Heart right ventricle (tissue), 16 donors: ENCODE measurements at regions of chr15 and their contacts with region 1.

Region 1: DNA sequence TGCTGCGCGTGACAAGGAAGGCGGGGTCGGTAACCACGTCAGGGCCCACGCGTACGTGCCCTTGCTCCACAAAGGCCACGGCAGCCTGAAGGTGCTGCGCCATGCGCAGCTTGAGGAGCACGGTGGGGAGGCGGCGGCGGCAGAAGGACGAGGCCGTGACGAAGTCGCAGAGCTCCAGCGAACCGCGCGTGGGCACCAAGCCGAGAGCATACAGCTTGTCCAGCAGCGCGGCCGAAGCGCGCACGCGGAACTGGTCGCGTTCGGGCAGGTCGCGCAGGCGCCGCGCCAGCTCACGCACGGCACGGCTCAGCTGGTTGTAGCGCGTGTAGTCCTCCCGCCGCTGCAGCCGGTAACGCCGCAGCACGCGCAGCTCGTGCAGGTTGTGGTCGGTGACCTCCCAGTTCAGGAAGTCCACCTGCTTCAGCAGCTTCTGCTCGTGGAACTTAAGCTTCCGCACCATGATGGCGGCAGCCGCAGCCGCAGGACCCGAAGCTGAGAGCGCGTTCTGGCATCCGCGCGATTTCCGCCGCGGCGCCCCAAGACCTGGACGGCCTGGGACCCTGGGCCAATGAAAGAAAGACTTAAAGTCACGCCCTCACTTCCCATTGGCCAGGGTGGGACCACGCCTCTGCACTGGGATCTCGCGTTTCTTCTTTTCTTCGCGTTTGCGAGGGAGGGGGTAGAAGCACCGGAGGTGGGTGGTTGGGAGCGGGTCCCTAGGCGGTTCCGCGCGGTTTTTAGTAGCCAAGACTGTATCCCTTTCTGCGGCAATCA is at the start of gene IMP3:
- DNase-seq: peak; percentile 93 to 96
- ATAC-seq: peak; percentile 97 to 98 (median 97)
- H3K4me3 ChIP-seq: peak within 1 kb of the TSS; percentile 67 to 98 (median 88)
- H3K27ac ChIP-seq: peak within 1 kb of the TSS; percentile 87 to 100 (median 92)
- H3K4me1 ChIP-seq: peaks cover 15 to 42% (median 37%) of the 10 kb centered on the region in 9 donors
- H3K27me3 ChIP-seq: no peaks in the 10 kb centered on the region
- CTCF ChIP-seq: no peak
- total RNA-seq, gene IMP3: 33.8 to 57.6 (median 40.2) TPM

Region 2: DNA sequence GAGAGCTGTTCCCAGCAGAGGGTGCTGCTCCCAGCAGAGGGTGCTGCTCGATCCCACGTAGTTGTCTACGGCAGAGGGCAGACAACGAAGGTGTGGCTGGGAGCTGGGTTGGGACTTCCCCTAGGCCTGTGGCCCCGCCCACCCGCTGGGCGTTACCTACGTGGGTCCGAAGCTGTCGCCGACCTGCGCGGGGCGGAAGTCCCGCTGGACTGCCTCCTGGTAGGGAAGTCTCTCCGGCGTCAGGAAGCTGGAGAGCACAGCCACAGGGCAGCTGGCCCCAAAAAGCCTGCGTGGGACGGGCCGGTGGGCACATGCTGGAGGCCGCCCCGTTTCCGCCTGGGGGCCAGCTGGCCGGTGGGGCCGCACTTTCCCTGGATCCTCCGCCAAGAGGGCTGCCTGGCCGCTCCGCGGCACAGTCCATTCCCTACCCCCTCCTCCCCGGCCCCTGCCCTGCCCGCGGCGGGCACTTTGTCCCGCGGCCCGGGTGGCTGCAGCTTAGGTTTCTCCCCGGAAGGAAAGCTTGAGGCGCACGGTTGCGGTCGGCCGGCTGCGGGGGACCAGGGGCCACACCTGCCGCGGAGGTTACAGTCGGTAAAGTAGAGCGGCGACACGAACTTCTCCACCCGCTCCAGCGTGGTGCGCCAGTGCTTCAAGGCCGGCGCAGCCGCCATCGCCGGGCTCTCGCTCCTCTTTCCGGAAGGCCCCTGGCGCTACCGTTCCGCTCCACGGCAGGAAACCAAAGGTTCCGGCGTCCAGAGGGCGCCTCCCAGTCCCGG is 271.8 kb before region 1 on chr15 and contains the start of gene MAN2C1:
- intact Hi-C with region 1: loop called in 1 of 10 experiments (anchors 5 kb)
- DNase-seq: peak; percentile 94
- ATAC-seq: peak; percentile 96 to 98 (median 97)
- H3K4me3 ChIP-seq: peak within 1 kb of the TSS; percentile 80 to 100 (median 91)
- H3K27ac ChIP-seq: peak within 1 kb of the TSS; percentile 82 to 100 (median 98)
- H3K4me1 ChIP-seq: peaks cover 5 to 25% (median 22%) of the 10 kb centered on the region in 9 donors
- H3K27me3 ChIP-seq: no peaks in the 10 kb centered on the region
- CTCF ChIP-seq: peak; percentile 51 to 93 (median 72)
- total RNA-seq, gene MAN2C1: 90.4 to 128 (median 108) TPM

Region 3: DNA sequence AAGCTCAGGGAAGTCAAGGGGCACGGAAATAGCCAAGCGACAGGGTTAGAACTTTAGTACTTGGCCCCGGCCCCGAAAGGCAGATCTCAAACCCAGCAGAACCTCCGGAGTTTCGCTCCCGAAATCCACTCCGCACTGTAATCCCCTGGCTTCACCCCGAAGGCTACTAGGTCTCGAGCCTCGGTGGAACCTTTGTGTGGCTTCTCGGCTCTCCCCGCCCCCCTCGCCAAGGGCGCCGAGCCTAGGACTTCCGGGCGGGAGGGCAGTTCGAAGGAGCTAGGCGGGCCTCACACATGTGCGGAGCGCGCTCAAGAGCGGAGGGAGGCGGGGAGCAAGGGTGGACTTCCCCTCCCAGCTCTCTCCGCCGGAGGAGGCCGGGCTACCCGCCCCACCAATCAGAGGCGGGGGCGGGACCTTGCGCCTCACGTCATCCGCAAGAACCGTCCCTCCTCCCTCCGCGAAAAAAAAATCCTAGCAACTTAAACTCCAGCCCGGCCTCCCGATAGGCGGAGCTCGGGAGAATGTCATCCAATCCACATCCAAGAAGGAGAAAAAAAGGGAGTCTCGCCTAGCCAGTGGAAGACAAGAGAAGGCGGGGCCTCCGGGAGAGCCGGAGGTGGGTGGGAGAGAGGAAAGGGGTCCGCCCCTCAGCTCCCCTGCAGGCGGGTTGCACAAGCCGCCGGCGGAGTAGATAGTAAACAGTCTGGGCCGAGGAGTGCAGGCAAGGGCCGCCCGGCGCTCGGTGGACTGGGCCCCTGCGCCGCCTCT is 186.0 kb before region 1 on chr15:
- intact Hi-C with region 1: loop called in 1 of 10 experiments (anchors 1 kb)
- DNase-seq: peak; percentile 97 to 98
- ATAC-seq: peak; percentile 61 to 79 (median 73)
- H3K4me3 ChIP-seq: peak overlapping the region; percentile 61 to 99 (median 94)
- H3K27ac ChIP-seq: peak overlapping the region; percentile 90 to 99 (median 98)
- H3K4me1 ChIP-seq: peaks cover 0 to 41% (median 31%) of the 10 kb centered on the region in 9 donors
- H3K27me3 ChIP-seq: no peaks in the 10 kb centered on the region
- CTCF ChIP-seq: peak in 1 of 9 donors; percentile 29

Region 4: GRCh38 chr15:75584121-75584520 is 55.8 kb before region 1 on chr15:
- intact Hi-C with region 1: no loop called
- DNase-seq: no peak
- ATAC-seq: peak in 4 of 8 donors; percentile 23 to 43 (median 36)
- H3K4me3 ChIP-seq: no peak overlapping the region
- H3K27ac ChIP-seq: peak overlapping the region in 6 of 10 donors; percentile 6 to 31 (median 22)
- H3K4me1 ChIP-seq: peaks cover 0 to 18% (median 7%) of the 10 kb centered on the region in 9 donors
- H3K27me3 ChIP-seq: no peaks in the 10 kb centered on the region
- CTCF ChIP-seq: no peak

Region 5: DNA sequence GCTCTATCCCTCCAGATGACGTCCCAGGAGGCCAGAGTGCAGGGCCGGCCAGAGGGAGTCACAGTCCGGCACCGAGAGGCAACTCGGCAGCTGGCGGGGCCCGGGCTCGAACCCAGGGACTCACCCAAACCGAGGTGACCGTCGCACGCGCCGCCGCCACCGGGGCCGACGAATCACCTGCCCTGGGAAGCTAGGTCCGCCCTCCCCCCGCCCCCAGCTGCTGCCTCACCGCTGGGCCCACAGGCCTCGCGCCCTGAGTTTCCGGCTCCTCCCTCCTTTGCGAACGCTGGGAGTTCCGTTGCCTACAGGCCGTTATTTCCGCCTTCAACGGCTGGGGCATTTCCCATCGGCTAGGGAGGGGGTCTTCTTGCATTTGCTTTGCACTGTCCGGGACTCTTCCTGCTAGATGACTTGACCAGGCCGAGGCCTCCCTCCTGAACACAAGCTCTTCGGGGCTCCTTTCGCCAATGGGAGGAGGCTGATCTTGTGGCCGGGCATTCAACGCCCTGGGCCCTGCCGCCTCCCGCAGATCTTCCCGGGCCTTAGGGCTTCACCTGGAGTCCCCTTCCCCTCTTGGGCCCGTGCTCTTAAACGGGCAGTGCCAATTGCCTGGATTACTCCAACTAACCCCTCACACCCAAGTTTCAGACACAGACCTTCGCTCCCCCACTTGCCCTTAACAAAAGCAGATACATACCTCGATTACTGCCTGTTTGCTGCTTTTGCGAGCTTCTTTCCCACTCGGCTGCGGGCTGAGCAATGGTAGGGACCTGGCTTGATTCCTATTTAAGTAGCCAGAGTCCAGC is 14.2 kb before region 1 on chr15 and contains the start of gene SNUPN:
- intact Hi-C with region 1: loop called in 1 of 10 experiments (anchors 2 kb)
- DNase-seq: peak; percentile 95 to 96
- ATAC-seq: peak; percentile 93 to 96 (median 95)
- H3K4me3 ChIP-seq: peak within 1 kb of the TSS; percentile 75 to 98 (median 88)
- H3K27ac ChIP-seq: peak within 1 kb of the TSS; percentile 76 to 100 (median 98)
- H3K4me1 ChIP-seq: peaks cover 0 to 30% (median 18%) of the 10 kb centered on the region in 9 donors
- H3K27me3 ChIP-seq: no peaks in the 10 kb centered on the region
- CTCF ChIP-seq: no peak
- total RNA-seq, gene SNUPN: 12.9 to 18.2 (median 16.1) TPM

Region 6: DNA sequence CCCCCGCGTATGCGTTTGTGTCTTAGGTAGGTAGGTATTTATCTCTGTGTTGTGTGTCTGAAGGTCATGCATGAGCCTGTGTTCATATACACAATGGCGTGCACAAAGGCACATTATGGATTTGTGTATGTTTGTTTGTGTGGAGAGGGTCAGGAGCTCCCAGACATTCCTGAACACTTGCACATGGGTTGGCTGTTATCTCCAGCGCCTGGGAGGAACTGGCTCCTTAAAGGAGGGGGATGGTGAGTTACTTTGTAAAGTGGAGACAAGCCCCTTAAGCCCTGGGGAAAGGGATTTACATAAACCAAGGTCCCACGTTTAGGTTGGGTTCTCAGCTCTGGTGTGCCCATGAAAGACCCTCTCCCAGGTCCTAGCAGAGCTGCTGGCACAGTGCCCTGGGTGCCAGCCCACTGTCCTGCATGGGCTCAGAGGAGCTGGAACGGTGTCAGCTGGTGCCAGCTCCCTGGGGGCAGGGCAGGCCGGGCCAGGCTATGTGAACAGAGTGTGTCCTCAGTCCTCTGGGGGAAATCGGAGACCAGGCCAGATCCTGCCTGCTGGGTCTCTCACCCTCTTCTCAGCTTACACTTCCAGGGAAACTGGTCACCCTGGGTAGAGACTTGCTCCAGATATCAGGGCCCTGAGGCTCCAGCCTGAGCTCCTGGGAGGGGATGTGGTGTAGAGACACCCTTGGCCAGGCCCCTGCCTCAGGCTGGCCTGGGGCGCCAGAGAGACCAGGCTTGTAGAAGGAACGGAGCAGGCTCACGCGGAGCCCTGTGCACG is 32.9 kb after region 1 on chr15:
- intact Hi-C with region 1: loop called in 3 of 10 experiments (anchors 5 kb)
- DNase-seq: peak in 1 of 2 donors; percentile 50
- ATAC-seq: peak; percentile 7 to 53 (median 28)
- H3K4me3 ChIP-seq: peak overlapping the region in 1 of 10 donors; percentile 18
- H3K27ac ChIP-seq: peak overlapping the region in 9 of 10 donors; percentile 14 to 81 (median 79)
- H3K4me1 ChIP-seq: peaks cover 20 to 67% (median 37%) of the 10 kb centered on the region in 9 donors
- H3K27me3 ChIP-seq: no peaks in the 10 kb centered on the region
- CTCF ChIP-seq: no peak

Region 7: GRCh38 chr15:75684642-75685041 is 44.7 kb after region 1 on chr15:
- intact Hi-C with region 1: loop called in 5 of 10 experiments (anchors 5 to 10 kb)
- DNase-seq: no peak
- ATAC-seq: no peak
- H3K4me3 ChIP-seq: no peak overlapping the region
- H3K27ac ChIP-seq: no peak overlapping the region
- H3K4me1 ChIP-seq: peaks cover 0 to 16% (median 5%) of the 10 kb centered on the region in 9 donors
- H3K27me3 ChIP-seq: no peaks in the 10 kb centered on the region
- CTCF ChIP-seq: no peak

Region 8: DNA sequence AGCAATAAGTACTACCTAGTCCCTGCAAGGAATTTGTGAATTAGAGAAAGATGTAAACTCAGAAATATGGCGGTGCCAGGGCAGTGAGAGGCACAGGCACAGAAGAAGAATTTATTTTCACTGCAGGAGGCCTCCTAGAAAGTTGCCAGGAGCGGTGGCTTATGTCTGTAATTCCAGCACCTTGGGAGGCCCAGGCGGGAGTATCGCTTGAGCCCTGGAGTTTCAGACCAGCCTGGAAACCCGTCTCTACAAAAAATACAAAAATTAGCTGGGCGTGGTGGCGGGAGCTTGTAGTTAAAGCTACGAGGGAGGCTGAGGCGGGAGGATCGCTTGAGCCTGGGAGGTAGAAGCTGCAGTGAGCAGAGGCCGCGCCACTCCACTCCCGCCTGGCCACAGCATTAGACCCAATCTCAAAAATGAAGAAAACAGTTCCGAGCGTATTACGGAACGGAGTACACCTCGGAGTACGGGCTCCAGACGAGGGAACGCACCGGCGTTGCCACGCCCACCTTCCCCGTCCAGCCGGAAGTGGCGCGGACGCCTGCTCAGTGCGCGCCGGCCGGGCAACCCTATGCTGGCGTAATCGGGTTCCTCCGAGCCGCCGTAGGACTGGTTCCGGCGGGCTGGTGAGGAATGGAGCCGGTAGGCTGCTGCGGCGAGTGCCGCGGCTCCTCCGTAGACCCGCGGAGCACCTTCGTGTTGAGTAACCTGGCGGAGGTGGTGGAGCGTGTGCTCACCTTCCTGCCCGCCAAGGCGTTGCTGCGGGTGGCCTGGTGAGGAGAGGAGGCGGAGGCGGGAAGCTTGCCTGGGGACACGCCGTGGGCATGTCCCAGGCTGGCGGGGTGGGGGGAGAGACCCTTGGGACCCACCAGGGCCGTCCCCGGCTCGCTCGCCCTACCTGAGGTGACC is 263.7 kb after region 1 on chr15 and contains the start of gene FBXO22:
- intact Hi-C with region 1: loop called in 1 of 10 experiments (anchors 10 kb)
- DNase-seq: peak; percentile 89 to 91
- ATAC-seq: peak; percentile 98 to 99 (median 99)
- H3K4me3 ChIP-seq: peak within 1 kb of the TSS; percentile 63 to 98 (median 92)
- H3K27ac ChIP-seq: peak within 1 kb of the TSS in 9 of 10 donors; percentile 53 to 92 (median 82)
- H3K4me1 ChIP-seq: peaks cover 0 to 32% (median 23%) of the 10 kb centered on the region in 9 donors
- H3K27me3 ChIP-seq: no peaks in the 10 kb centered on the region
- CTCF ChIP-seq: no peak
- total RNA-seq, gene FBXO22: 15.6 to 23.4 (median 18.6) TPM

Region 9: DNA sequence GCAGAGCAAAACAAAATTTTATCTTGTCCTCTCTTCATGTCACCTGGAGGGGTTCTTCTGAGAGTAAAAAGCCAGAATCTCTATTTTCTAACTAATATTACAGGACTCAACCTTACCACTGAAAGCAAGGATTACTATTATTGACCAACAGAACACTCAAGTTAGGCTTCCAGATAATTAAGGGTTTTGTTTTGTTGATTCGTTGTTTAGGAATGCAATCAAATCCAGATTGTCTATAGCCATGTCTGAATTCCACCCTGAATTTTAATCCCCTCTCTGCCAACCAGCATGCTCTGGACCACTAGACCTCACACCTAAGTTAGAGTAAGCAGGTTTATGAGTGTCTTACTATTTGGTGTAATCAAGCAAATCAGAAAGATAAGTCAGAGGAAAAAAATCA is 1689.3 kb after region 1 on chr15:
- intact Hi-C with region 1: no loop called
- DNase-seq: no peak
- ATAC-seq: no peak
- H3K4me3 ChIP-seq: no peak overlapping the region
- H3K27ac ChIP-seq: no peak overlapping the region
- H3K4me1 ChIP-seq: peaks cover 2 to 56% (median 37%) of the 10 kb centered on the region in 9 donors
- H3K27me3 ChIP-seq: no peaks in the 10 kb centered on the region
- CTCF ChIP-seq: no peak